Activated T-helper 2 cell treated with anti-CD3 and anti-CD28 coated beads, Interferon-gamma antibody, Interleukin-2, Interleukin-4, amounts not matched to agents 10 μg/mL and 5 μg/mL and 100 μg/mL, durations not matched to agents 14 hours and 24 hours and 36 hours (primary cell): ENCODE measurements at regions of chr14 and their contacts with region 1.

Region 1: GRCh38 chr14:96501742-96502617 is at the start of gene PAPOLA:
- DNase-seq: peak; percentile 94
- H3K4me3 Mint-ChIP-seq: peak within 1 kb of the TSS; percentile 98
- H3K27ac Mint-ChIP-seq: peak within 1 kb of the TSS; percentile 99
- H3K4me1 Mint-ChIP-seq: peaks cover 50% of the 10 kb centered on the region
- H3K27me3 Mint-ChIP-seq: peaks cover 5% of the 10 kb centered on the region
- total RNA-seq, gene PAPOLA: 211 and 217 TPM in 2 replicates

Region 2: GRCh38 chr14:96391293-96392118 is 110.5 kb before region 1 on chr14:
- intact Hi-C with region 1: loop called (anchors 10 kb)
- DNase-seq: peak; percentile 99
- H3K4me3 Mint-ChIP-seq: peak overlapping the region; percentile 91
- H3K27ac Mint-ChIP-seq: no peak overlapping the region
- H3K4me1 Mint-ChIP-seq: peaks cover 1% of the 10 kb centered on the region
- H3K27me3 Mint-ChIP-seq: peaks cover 11% of the 10 kb centered on the region

Region 3: DNA sequence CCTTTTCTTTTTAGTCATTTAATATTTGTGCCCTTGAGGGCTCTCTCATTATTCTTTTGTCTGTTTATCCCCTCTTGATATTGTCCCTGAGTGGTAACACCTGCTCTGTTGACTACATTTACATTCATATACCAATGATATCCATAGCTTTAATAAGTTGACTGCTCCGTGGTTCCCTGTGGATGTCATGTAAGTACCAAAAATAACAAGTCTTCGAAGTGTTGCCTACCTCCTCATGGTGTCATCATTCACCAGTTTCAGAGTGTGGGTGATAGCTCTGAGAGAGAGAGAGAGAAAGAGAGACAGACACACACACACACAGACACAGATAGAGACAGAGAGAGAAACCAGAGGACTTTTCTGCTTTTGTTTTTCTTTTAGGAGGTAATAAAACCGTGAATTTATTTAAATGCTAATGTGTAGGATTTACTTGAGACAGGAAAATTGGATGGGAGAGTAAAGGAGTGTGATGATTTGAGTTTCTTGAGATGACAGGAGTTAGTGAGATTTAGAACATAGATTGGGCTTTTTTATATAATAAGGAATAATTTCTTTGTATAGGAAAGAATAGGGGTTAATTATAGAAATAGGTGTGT is 52.4 kb after region 1 on chr14:
- intact Hi-C with region 1: no loop called
- DNase-seq: no peak
- H3K4me3 Mint-ChIP-seq: no peak overlapping the region
- H3K27ac Mint-ChIP-seq: peak overlapping the region; percentile 52
- H3K4me1 Mint-ChIP-seq: peaks cover 6% of the 10 kb centered on the region
- H3K27me3 Mint-ChIP-seq: no peaks in the 10 kb centered on the region

Region 4: GRCh38 chr14:96648506-96649326 is 146.7 kb after region 1 on chr14:
- intact Hi-C with region 1: no loop called
- DNase-seq: no peak
- H3K4me3 Mint-ChIP-seq: no peak overlapping the region
- H3K27ac Mint-ChIP-seq: no peak overlapping the region
- H3K4me1 Mint-ChIP-seq: no peaks in the 10 kb centered on the region
- H3K27me3 Mint-ChIP-seq: peaks cover 29% of the 10 kb centered on the region

Region 5: GRCh38 chr14:96938946-96939345 is 437.0 kb after region 1 on chr14:
- intact Hi-C with region 1: no loop called
- DNase-seq: no peak
- H3K4me3 Mint-ChIP-seq: no peak overlapping the region
- H3K27ac Mint-ChIP-seq: no peak overlapping the region
- H3K4me1 Mint-ChIP-seq: no peaks in the 10 kb centered on the region
- H3K27me3 Mint-ChIP-seq: no peaks in the 10 kb centered on the region